ENCODE measurements at regions of chr15 and their contacts with region 1.

Region 1: DNA sequence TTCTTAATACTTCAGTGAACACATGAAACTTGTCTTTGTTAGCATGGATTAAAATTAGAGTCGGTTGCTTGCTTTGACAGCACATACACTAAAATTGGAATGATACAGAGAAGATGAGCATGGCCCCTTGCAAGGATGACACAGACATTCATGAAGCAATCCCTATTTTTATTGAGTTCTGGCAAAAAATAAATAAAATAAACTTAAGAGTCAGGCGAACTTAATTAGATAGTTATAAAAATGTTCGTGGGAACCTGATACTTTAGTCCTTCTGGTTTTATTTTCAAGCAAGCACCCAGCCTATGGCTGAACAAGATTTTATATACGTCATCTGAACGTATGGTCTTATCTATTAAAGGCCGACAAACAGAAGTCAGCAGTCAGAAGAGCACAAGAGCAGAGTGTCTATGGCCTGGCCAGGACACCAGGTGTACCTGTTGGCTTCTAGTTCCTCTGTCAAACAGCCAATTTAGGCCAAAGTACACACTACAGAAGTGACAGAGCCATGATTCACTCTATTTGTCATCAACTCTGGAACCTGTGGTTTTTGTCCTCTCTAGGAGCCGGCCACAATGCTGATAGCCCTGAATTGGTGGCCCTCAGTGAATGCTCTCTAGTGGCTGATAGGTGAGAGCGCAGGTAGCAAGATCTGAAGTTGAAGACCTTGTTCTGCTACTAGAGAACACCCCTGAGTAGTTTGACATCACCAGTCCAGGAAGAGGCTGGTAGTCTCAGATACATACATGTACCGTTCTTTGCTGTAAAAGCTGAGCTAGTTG is 64.3 kb downstream of the LEO1 start:
- DNase-seq: peak; percentile 98
- ATAC-seq: peak; percentile 92
- H3K4me3 ChIP-seq: no peak overlapping the region
- H3K27ac ChIP-seq: peak overlapping the region; percentile 90
- H3K4me1 ChIP-seq: peaks cover 38% of the 10 kb centered on the region
- H3K27me3 ChIP-seq: no peaks in the 10 kb centered on the region
- CTCF ChIP-seq: peak; percentile 64

Region 2: GRCh38 chr15:51649659-51650521 is 257.4 kb before region 1 on chr15:
- CTCF ChIA-PET with region 1: interaction called, 7 read pairs
- POLR2A ChIA-PET with region 1: no interaction called
- intact Hi-C with region 1: loop called (anchors 5 kb)
- DNase-seq: peak; percentile 77
- ATAC-seq: peak; percentile 81
- H3K4me3 ChIP-seq: no peak overlapping the region
- H3K27ac ChIP-seq: no peak overlapping the region
- H3K4me1 ChIP-seq: peaks cover 4% of the 10 kb centered on the region; the same call in 1 of the 2 replicates
- H3K27me3 ChIP-seq: no peaks in the 10 kb centered on the region
- CTCF ChIP-seq: peak; percentile 80

Region 3: DNA sequence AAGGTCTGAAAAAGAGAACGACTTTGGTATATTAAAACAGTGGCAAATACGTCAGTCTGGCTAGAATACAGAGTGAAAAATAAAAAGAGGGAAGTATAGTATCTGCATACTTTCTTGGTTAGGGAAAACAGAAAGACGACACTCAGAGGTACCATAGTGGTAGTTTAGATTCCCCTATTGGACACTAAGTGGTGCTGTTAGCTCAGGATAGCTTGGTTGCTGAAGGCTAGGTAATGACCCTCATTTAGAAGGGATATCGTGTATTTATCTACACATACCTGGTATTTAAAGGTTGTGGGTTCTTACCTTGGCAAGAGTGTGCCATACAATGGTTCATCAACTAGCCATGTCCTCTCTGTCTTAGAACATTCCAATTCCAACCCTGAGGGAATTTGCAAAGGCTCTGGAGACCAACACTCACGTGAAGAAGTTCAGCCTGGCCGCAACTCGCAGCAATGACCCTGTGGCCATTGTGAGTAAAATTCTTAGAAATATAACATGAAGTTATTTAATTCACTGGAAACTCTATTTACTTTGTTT is 124.9 kb before region 1 on chr15:
- CTCF ChIA-PET with region 1: no interaction called
- POLR2A ChIA-PET with region 1: no interaction called
- intact Hi-C with region 1: loop called (anchors 5 kb)
- DNase-seq: peak; percentile 50
- ATAC-seq: peak; percentile 45; the same call in 1 of the 2 replicates
- H3K4me3 ChIP-seq: no peak overlapping the region
- H3K27ac ChIP-seq: no peak overlapping the region
- H3K4me1 ChIP-seq: peaks cover 17% of the 10 kb centered on the region
- H3K27me3 ChIP-seq: no peaks in the 10 kb centered on the region
- CTCF ChIP-seq: peak; percentile 64

Region 4: DNA sequence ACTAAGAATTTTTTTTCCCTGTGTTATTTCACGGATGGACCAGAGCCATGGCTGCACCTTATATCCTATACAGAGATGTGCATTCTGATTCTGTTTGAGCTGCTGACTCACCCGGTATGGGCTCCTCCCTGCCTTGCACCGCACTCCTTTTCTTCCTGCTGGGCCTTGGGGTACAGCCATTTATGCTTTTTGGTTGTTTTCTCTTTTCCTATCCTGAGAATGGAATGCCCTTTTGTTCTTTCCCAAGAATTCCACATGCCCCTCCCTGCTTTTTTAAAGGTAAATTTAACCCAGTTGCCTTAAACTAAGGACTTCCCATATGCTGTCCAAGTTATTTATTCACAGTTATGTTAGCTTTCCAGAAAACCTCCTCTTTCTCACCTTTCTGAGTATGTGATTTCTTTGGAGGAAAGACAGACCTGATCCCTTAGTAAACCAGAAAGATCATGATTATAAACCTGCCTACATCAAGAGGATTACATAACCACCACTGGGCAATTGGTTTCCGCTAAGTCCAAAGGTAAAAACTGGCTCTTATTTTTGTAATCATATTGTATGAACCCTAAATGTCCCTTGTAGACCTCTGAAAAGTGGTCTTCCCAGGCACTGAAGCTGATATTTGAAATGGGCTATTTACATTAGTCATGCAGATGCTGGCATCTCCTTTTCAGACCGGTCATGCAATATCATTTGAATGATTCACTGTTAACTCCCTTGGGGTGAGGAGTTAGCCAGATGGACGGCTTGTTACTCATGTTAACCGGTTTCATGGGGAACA is 32.4 kb before region 1 on chr15:
- CTCF ChIA-PET with region 1: no interaction called
- POLR2A ChIA-PET with region 1: no interaction called
- intact Hi-C with region 1: loop called (anchors 2 kb)
- DNase-seq: peak; percentile 95
- ATAC-seq: peak; percentile 95
- H3K4me3 ChIP-seq: peak overlapping the region; percentile 63
- H3K27ac ChIP-seq: peak overlapping the region; percentile 100
- H3K4me1 ChIP-seq: peaks cover 47% of the 10 kb centered on the region
- H3K27me3 ChIP-seq: no peaks in the 10 kb centered on the region
- CTCF ChIP-seq: no peak

Measured in PC-3 (cell line).